ENCODE measurements at regions of chr6 and their contacts with region 1.

Region 1: GRCh38 chr6:52787917-52788316 is 15.7 kb downstream of the GSTA1 start:
- DNase-seq: no peak
- H3K4me3 Mint-ChIP-seq: no peak overlapping the region
- H3K27ac Mint-ChIP-seq: no peak overlapping the region
- H3K4me1 Mint-ChIP-seq: no peaks in the 10 kb centered on the region
- H3K27me3 Mint-ChIP-seq: peaks cover 2% of the 10 kb centered on the region

Region 2: DNA sequence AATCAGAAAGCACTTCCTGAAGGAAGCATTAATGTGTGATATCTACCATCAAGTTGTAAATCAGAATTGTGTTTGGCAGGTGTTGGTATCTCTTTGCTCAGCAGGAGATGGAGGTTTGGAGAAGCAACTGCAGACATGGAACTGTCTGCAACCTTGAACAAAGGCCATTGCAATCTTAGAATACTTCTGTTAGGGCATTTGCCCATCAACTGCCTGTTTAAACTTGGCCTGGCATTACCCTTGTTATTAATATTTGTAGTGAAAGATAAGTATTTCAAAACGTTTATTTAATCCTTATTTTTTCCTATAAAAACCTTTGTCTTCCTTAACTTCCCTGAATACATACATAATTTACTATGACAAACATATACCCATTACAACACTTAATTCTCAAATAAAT is 38.6 kb after region 1 on chr6:
- intact Hi-C with region 1: loop called (anchors 2 kb)
- DNase-seq: no peak
- H3K4me3 Mint-ChIP-seq: no peak overlapping the region
- H3K27ac Mint-ChIP-seq: no peak overlapping the region
- H3K4me1 Mint-ChIP-seq: no peaks in the 10 kb centered on the region
- H3K27me3 Mint-ChIP-seq: peaks cover 1% of the 10 kb centered on the region

Region 3: DNA sequence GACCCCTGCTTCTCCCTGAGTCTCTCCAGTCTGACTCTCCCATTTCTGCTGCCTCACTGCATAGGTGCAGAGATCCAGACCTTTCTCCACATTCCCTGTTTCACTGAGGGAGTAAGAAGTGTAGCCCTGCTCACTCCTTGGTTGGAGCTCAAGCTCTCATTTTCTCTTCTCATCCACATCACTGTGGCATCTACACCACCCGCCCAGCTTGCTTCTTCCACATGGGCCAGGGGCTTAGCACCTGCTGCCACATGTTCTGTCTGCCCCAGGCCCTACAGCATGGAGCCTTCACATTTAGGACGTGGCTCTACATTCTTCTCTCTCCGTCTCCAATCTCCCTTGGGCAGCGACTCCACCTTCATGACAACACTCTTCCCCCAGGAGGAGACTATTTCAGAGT is 61.2 kb after region 1 on chr6:
- intact Hi-C with region 1: no loop called
- DNase-seq: no peak
- H3K4me3 Mint-ChIP-seq: no peak overlapping the region
- H3K27ac Mint-ChIP-seq: no peak overlapping the region
- H3K4me1 Mint-ChIP-seq: no peaks in the 10 kb centered on the region
- H3K27me3 Mint-ChIP-seq: peaks cover 20% of the 10 kb centered on the region

Measured in activated CD4-positive, alpha-beta T cell treated with anti-CD3 and anti-CD28 coated beads, Interleukin-2, amount 10 ng/mL, durations not matched to agents 24 days and 14 days (primary cell).